Activated CD4-positive, alpha-beta T cell treated with anti-CD3 and anti-CD28 coated beads for 36 hours (primary cell): ENCODE measurements at regions of chr17 and their contacts with region 1.

Region 1: GRCh38 chr17:43745541-43745940 is 13.1 kb downstream of the SOST start:
- DNase-seq: no peak
- ATAC-seq: no peak
- H3K4me3 Mint-ChIP-seq: no peak overlapping the region
- H3K27ac Mint-ChIP-seq: no peak overlapping the region
- H3K4me1 Mint-ChIP-seq: no peaks in the 10 kb centered on the region
- H3K27me3 Mint-ChIP-seq: peaks cover 37% of the 10 kb centered on the region

Region 2: DNA sequence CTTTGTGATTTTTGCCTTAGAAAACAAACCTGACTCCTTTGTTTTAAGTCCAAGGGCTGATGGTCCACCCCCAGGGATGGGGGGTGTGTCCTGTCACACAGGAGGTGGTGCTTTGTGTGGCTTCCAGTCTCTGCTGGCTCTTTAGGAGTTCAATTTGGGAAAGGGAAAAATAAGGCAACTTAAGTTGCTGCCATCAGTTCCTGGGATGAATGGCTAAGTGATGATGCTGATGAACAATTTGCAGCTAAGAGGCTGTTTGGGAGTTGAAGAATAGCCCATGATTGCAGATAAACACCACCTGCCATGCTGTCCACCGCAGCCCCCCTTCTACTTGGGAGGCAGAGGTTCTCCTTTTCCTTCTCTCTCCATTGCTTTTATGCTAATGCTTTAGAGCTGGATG is 306.5 kb before region 1 on chr17:
- CTCF ChIA-PET with region 1: no interaction called
- POLR2A ChIA-PET with region 1: no interaction called
- intact Hi-C with region 1: no loop called
- DNase-seq: no peak
- ATAC-seq: no peak
- H3K4me3 Mint-ChIP-seq: no peak overlapping the region
- H3K27ac Mint-ChIP-seq: no peak overlapping the region
- H3K4me1 Mint-ChIP-seq: no peaks in the 10 kb centered on the region
- H3K27me3 Mint-ChIP-seq: peaks cover 10% of the 10 kb centered on the region

Region 3: DNA sequence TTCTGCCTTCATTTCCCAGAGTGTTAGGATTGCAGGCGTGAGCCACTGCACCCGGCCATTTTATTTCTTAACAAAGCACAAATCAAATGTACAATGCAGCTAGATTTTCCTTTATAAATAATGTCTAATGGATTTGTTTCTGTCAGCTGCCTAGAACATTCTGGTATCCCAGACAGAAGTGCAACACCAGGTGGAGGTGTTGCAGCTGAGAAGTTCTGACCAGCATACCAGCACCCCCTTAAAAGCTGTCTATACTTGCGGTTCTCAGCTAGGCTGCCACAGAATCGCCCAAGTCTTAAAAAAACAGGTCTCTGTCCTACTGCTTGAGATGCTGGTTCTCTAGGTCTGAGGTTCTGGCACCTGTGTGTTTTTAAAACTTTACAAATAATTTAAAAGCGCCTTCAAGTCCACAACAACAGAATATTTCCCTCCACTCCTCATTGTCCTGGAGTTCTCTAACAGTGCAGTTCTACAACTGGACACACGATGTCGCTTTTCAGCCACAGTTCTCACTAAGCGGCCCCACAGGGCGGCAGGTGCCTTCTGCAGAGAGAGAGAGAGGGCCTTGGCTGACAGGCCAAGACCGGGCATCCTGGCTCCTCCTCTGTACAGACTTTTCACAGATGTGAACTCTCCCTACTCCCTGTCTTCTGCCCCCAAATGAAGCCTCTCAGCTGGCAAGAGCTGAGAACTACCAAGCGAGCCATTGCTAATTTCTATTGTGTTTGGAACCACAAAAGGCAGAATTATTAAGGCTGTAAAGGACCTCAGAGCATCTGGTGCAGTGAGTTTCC is 51.3 kb before region 1 on chr17:
- CTCF ChIA-PET with region 1: interaction called, 14 read pairs
- POLR2A ChIA-PET with region 1: no interaction called
- intact Hi-C with region 1: no loop called
- DNase-seq: peak; percentile 86
- ATAC-seq: peak; percentile 99
- H3K4me3 Mint-ChIP-seq: no peak overlapping the region
- H3K27ac Mint-ChIP-seq: no peak overlapping the region
- H3K4me1 Mint-ChIP-seq: no peaks in the 10 kb centered on the region
- H3K27me3 Mint-ChIP-seq: peaks cover 3% of the 10 kb centered on the region

Region 4: DNA sequence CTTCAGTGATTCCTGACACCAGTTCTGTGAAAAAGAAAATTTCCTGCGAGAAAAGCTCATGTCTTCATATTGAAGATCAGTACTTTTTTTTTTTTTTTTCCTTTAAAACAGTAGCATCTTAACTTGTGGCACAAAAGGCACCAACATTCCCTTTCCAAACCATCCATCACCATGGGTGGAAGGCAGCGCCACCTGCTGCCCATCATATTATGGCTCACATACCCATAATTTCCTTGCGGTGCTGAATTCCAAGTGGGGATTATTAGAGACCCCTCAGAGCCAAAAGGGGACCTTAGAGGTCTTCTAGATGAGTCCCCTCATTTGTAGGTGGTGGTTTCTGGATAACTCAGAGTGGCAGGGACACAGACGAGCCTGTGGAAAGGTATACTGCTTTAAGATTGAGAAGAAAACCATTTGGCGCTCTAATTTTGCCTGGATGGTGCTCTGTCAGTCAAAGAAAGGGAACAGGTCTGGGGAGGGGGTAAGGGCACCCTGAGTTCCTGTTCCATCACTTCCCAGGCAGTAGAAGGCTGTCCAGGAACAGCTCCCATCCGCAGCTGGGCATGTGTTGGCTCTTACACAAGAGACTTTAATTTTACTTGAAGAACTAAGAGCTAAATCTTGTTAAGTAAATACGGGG is 21.0 kb after region 1 on chr17:
- CTCF ChIA-PET with region 1: interaction called, 13 read pairs
- POLR2A ChIA-PET with region 1: no interaction called
- intact Hi-C with region 1: no loop called
- DNase-seq: peak; percentile 73
- ATAC-seq: no peak
- H3K4me3 Mint-ChIP-seq: no peak overlapping the region
- H3K27ac Mint-ChIP-seq: no peak overlapping the region
- H3K4me1 Mint-ChIP-seq: no peaks in the 10 kb centered on the region
- H3K27me3 Mint-ChIP-seq: no peaks in the 10 kb centered on the region